Activated T-helper 1 cell treated with anti-CD3 and anti-CD28 coated beads, Interleukin-12 subunit alpha, Interleukin-12 subunit beta, Interleukin-2, Interleukin-4 antibody, amounts not matched to agents 30 ng/mL and 10 ng/mL and 1 ng/mL, durations not matched to agents 14 hours and 24 hours and 36 hours (primary cell): ENCODE measurements at regions of chr5 and their contacts with region 1.

Region 1: DNA sequence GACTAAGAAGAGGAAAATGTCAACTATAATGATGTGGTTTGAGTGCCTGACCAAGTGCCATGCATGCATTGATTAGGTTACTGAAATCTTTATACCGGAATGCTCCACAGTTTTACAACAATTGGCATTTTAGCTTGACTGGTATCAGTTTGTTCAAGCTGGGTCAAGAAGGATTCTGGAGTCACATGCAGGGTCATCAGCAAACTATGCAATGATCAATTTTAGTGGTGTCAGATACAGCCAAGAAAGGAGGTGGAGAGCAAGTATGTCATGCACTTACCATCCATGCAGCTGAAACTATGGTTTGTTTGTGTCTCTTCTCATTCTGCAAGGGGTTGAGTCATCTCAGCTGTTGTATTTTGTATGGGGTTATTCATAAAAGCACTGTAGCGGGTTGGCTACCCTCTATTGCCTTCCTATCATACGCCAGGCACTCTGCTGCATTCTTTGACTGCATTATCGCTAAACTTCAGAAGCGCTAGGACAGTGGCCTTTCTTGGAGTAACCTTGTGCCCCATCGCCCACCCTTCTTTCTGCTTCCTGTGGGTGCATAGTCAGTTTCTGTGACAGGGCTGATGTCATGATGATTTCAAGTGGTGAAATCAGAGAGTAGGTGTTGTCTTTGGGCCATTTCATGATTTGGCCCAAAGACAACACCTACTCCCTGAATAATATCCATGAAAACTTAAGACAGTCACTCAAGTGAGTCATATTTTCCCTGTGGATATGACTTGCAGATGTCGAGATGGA is 145.4 kb downstream of the MTX3 start:
- DNase-seq: peak; percentile 20
- H3K4me3 Mint-ChIP-seq: no peak overlapping the region
- H3K27ac Mint-ChIP-seq: peak overlapping the region; percentile 84
- H3K4me1 Mint-ChIP-seq: peaks cover 26% of the 10 kb centered on the region
- H3K27me3 Mint-ChIP-seq: peaks cover 4% of the 10 kb centered on the region

Region 2: DNA sequence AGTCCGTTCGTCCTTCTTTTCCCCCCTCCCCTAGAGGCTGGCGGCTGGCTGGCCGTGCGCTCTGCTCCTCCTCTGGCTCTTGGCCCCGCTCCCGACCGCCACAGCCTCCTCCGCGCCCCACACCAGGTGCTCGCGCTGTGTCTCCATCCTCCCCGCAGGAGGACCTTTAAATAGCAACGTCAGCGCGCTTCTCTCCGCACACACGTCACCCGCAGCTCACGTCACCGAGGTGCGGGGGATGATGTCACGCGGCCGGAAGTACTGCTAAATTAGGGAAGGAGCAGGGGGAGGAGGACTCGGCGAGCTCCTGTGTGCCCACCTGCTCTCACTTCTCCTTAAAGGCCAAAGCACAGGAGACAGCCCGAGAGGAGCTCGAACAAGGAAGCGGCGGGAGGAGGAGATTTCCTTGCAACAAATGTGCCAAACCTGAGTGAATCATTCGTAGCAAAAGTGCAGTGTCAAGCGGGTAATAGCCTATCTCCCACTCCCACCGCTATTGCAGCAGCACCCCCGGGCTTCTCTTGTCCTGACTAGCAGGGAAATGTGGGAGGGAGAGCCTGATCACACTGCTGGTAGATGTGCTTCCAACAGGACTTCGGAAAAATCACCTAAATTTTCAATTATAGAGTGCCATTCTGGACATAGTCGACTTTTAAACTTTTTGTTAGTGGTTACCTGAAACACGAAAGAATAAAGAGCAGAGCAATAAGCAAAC is 331.1 kb before region 1 on chr5:
- intact Hi-C with region 1: loop called (anchors 1 kb)
- DNase-seq: peak; percentile 88
- H3K4me3 Mint-ChIP-seq: peak overlapping the region; percentile 99
- H3K27ac Mint-ChIP-seq: peak overlapping the region; percentile 100
- H3K4me1 Mint-ChIP-seq: peaks cover 43% of the 10 kb centered on the region
- H3K27me3 Mint-ChIP-seq: peaks cover 26% of the 10 kb centered on the region

Region 3: GRCh38 chr5:79612667-79613198 is 232.9 kb before region 1 on chr5:
- intact Hi-C with region 1: loop called (anchors 1 kb)
- DNase-seq: no peak
- H3K4me3 Mint-ChIP-seq: peak overlapping the region; percentile 91
- H3K27ac Mint-ChIP-seq: peak overlapping the region; percentile 97
- H3K4me1 Mint-ChIP-seq: peaks cover 45% of the 10 kb centered on the region
- H3K27me3 Mint-ChIP-seq: no peaks in the 10 kb centered on the region

Region 4: GRCh38 chr5:79800979-79801827 is 44.4 kb before region 1 on chr5:
- intact Hi-C with region 1: loop called (anchors 5 kb)
- DNase-seq: no peak
- H3K4me3 Mint-ChIP-seq: no peak overlapping the region
- H3K27ac Mint-ChIP-seq: peak overlapping the region; percentile 42
- H3K4me1 Mint-ChIP-seq: peaks cover 19% of the 10 kb centered on the region
- H3K27me3 Mint-ChIP-seq: no peaks in the 10 kb centered on the region